ENCODE measurements at regions of chr14 and their contacts with region 1.

Region 1: GRCh38 chr14:59055439-59056045 is 132.9 kb upstream of the DAAM1 start:
- DNase-seq: no peak
- ATAC-seq: peak; percentile 86

Region 2: DNA sequence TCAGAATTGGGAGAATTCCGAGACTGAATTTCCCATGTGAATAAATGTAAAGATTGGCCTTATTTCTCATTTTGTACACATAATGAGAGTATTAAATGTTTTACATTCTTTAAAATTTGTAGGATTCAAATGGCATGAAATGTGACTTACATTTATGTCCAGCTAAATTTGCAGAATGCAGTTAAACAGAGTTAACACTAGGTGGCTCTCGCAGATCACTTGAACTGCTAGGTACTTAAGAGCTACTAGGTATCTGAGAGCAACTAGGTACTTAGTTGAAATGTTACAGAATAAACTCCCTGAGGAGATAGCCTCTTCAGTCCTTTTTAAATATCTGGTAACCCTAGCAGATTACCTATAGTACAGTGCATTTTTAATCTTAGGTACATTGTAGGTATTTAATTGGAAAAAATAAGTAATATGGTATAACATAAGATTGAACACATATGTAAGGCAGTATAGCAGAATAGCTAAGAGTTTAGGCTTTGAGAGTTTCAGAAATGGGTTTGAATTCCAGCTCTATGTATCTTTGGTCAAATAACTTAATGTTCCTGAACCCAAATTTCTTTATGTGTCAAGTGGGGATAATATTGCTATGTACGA is 554.2 kb before region 1 on chr14:
- intact Hi-C with region 1: loop called (anchors 5 kb)
- DNase-seq: no peak
- ATAC-seq: peak; percentile 71